ENCODE measurements at regions of chr11 and their contacts with region 1.

Region 1: GRCh38 chr11:93543292-93543977 is at the start of gene SMCO4:
- DNase-seq: peak; percentile 63 to 66
- ATAC-seq: peak; percentile 82 to 88
- H3K4me3 ChIP-seq: peak within 1 kb of the TSS; percentile 64 to 85 (median 72)
- H3K27ac ChIP-seq: peak within 1 kb of the TSS; percentile 69 to 77 (median 74)
- H3K4me1 ChIP-seq: peaks cover 13% of the 10 kb centered on the region in 2 donors
- H3K27me3 ChIP-seq: no peaks in the 10 kb centered on the region
- CTCF ChIP-seq: peak; percentile 72 to 87 (median 76)
- POLR2A ChIP-seq: peak in 1 of 2 donors; percentile 22
- total RNA-seq, gene SMCO4: 3.1 to 18.1 (median 10.2) TPM

Region 2: DNA sequence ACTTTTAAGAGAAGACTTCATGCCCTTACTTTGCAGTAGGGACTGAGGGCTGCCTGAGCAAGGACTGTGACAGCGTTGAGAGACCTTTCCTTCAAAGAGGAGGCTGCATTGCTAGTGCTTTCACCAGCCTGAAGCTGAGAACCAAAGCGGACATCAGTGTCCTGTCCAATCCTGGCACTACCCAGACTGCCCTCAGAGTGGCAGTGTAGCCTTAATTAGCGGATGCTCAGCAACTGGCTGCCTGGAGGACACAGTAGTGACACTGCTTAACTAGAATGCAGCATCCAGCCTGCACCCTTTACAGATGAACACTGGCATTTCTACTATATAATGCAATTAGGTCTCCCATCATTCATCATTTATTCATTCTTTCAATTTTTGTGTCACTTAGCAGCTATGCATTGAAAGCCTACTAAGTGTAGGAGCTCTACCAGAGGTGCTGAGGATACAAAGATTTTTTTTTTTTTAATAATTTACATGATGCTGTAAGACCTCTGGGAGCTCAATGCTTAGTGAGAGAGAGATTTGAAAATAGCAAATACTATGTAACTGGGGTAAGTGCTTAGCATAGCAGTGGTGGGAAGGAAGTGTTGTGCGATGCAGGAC is 308.7 kb before region 1 on chr11:
- in situ Hi-C with region 1: loop called (anchors 5 to 10 kb)
- intact Hi-C with region 1: loop called (anchors 1 kb)
- DNase-seq: peak; percentile 42 to 59
- ATAC-seq: peak; percentile 94 to 99
- H3K4me3 ChIP-seq: no peak overlapping the region
- H3K27ac ChIP-seq: no peak overlapping the region
- H3K4me1 ChIP-seq: no peaks in the 10 kb centered on the region
- H3K27me3 ChIP-seq: no peaks in the 10 kb centered on the region
- CTCF ChIP-seq: peak; percentile 71 to 95 (median 86)
- POLR2A ChIP-seq: no peak

Region 3: DNA sequence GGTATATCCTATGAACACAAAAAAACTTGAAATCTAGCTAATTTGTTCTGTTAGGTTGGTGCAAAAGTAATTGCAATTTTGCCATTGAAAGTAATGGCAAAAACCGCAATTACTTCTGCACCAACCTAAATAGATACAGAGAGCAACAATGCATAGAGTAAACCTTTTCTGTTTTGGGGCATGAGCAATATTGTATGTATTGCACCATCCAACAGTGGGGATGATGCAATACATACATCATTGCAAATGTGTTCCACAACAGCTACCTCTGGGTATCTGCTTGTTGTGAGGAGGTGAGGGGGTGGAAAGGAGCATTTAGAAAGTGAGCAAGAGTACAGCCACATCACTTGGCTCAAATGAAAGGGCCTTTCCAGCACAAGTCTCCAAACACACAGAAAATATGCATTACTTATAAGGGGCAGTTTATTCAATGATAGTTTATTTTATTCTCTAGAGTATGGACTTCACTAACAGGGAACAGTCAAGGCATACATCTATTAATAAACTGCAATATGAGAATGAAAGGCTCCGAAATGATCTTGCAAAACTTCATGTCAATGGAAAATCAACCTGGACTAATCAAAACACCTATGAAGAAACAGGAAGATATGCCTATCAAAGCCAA is 135.5 kb before region 1 on chr11:
- in situ Hi-C with region 1: no loop called
- intact Hi-C with region 1: loop called (anchors 10 kb)
- DNase-seq: no peak
- ATAC-seq: no peak
- H3K4me3 ChIP-seq: no peak overlapping the region
- H3K27ac ChIP-seq: no peak overlapping the region
- H3K4me1 ChIP-seq: no peaks in the 10 kb centered on the region
- H3K27me3 ChIP-seq: no peaks in the 10 kb centered on the region
- CTCF ChIP-seq: no peak
- POLR2A ChIP-seq: no peak

Region 4: DNA sequence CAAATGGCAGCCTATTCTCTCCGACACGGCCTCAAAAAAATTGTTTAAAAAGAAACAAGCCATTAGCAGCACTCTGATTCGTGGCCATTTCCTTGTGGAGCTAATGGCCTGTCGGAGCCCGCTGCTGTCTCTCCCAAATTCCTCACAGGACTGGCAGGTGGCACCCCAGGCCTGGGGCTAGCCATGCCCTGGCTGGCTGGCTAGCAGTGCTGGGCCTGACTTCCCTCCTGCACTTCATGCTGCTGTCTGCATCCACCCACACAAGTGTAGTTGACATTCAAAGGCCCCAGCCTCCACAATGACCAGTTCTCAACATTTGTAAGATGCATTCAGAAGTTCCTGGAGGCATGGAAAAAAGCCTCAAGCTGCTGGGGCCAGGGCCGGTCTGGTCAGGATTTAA is 61.7 kb before region 1 on chr11:
- in situ Hi-C with region 1: no loop called
- intact Hi-C with region 1: loop called (anchors 1 kb)
- DNase-seq: no peak
- ATAC-seq: no peak
- H3K4me3 ChIP-seq: no peak overlapping the region
- H3K27ac ChIP-seq: no peak overlapping the region
- H3K4me1 ChIP-seq: no peaks in the 10 kb centered on the region
- H3K27me3 ChIP-seq: no peaks in the 10 kb centered on the region
- CTCF ChIP-seq: peak in 3 of 5 experiments; percentile 14 to 49 (median 22)
- POLR2A ChIP-seq: no peak

Region 5: GRCh38 chr11:93529707-93530467 is 13.5 kb before region 1 on chr11:
- in situ Hi-C with region 1: no loop called
- intact Hi-C with region 1: loop called (anchors 2 kb)
- DNase-seq: no peak
- ATAC-seq: no peak
- H3K4me3 ChIP-seq: peak overlapping the region in 1 of 4 donors; percentile 24
- H3K27ac ChIP-seq: peak overlapping the region; percentile 85 to 98 (median 90)
- H3K4me1 ChIP-seq: peaks cover 70 to 71% of the 10 kb centered on the region in 2 donors
- H3K27me3 ChIP-seq: no peaks in the 10 kb centered on the region
- CTCF ChIP-seq: no peak
- POLR2A ChIP-seq: no peak

Region 6: DNA sequence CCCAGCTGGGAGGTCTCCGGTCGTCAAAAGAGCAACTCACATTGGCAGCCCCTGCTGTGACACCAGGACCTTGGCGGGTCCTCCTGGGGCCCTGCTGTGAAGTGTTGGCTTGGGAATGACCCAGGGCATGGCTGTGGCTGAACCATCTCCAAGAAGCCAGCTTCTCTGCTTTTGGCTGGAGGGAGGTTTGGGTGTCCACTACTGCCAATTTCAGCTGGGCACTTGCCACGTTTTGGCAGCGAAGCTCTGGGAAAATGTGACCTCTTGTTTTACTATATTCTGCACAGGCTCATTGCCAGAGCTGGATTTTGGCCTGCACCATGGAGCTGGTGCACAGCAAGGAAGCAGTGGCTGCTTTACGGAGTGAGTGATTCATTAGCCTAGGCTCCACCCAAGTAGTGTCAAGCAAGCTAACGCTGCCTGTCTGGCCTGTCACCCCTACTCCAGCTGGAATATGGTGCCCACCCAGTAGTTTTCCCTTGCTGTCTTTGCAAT is 24.0 kb after region 1 on chr11:
- in situ Hi-C with region 1: no loop called
- intact Hi-C with region 1: no loop called
- DNase-seq: peak; percentile 59 to 76
- ATAC-seq: peak; percentile 91
- H3K4me3 ChIP-seq: no peak overlapping the region
- H3K27ac ChIP-seq: peak overlapping the region; percentile 49 to 72 (median 64)
- H3K4me1 ChIP-seq: peaks cover 33 to 42% of the 10 kb centered on the region in 2 donors
- H3K27me3 ChIP-seq: no peaks in the 10 kb centered on the region
- CTCF ChIP-seq: no peak
- POLR2A ChIP-seq: no peak

Region 7: GRCh38 chr11:93585758-93586157 is 42.3 kb after region 1 on chr11:
- in situ Hi-C with region 1: no loop called
- intact Hi-C with region 1: loop called (anchors 1 kb)
- DNase-seq: peak in 1 of 2 donors; percentile 40
- ATAC-seq: peak; percentile 77 to 85
- H3K4me3 ChIP-seq: no peak overlapping the region
- H3K27ac ChIP-seq: peak overlapping the region in 1 of 4 donors; percentile 60
- H3K4me1 ChIP-seq: peaks cover 0 to 10% of the 10 kb centered on the region in 2 donors
- H3K27me3 ChIP-seq: peaks cover 0 to 3% (median 0%) of the 10 kb centered on the region in 3 donors
- CTCF ChIP-seq: no peak
- POLR2A ChIP-seq: no peak

Region 8: DNA sequence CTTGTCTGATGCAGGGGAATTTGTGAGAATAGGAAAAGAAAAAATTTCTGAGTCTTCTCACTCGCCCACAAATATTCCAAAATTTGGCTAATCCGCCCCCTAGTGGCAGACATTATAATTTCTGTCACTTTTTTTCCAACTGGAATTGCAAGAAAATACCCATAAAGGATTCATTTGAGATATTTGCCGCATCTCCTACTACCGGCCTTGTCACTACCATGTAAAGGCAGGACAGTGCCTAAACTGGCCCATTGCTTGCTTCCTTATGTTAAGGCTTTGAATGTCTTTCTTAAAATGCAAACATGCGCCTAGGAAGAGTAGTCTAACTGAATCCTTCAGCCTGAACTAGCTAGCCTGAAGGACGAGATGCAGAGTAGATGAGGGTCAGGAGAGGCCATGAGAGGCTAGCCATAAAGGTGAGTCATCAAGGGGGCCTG is 108.7 kb after region 1 on chr11:
- in situ Hi-C with region 1: loop called in 1 of 4 experiments (anchors 10 kb)
- intact Hi-C with region 1: loop called (anchors 1 kb)
- DNase-seq: no peak
- ATAC-seq: no peak
- H3K4me3 ChIP-seq: no peak overlapping the region
- H3K27ac ChIP-seq: no peak overlapping the region
- H3K4me1 ChIP-seq: no peaks in the 10 kb centered on the region
- H3K27me3 ChIP-seq: no peaks in the 10 kb centered on the region
- CTCF ChIP-seq: peak; percentile 41 to 77 (median 68)
- POLR2A ChIP-seq: no peak

Region 9: DNA sequence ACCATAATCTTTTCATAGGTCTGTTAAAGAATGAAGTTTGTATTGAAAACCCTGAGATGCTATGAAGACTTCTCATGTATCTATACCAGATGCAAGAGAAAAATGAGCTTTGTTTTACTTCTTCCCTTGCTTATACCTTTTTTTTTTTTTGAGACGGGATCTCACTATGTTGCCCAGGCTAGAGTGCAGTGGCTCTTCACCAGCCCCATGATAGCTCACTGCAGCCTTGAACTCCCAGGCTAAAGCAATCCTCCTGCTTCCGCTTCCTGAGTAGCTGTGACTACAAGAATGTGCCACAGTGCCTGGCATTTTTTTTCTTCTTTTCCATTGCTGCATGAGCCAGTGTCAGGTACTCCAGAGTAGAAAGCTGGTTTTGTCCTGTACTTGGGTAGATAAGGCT is 128.8 kb after region 1 on chr11:
- in situ Hi-C with region 1: no loop called
- intact Hi-C with region 1: no loop called
- DNase-seq: no peak
- ATAC-seq: no peak
- H3K4me3 ChIP-seq: no peak overlapping the region
- H3K27ac ChIP-seq: no peak overlapping the region
- H3K4me1 ChIP-seq: no peaks in the 10 kb centered on the region
- H3K27me3 ChIP-seq: no peaks in the 10 kb centered on the region
- CTCF ChIP-seq: no peak
- POLR2A ChIP-seq: no peak

Region 10: GRCh38 chr11:94134651-94135512 is 591.4 kb after region 1 on chr11:
- in situ Hi-C with region 1: no loop called
- intact Hi-C with region 1: no loop called
- DNase-seq: peak; percentile 55 to 88
- ATAC-seq: peak; percentile 90 to 93
- H3K4me3 ChIP-seq: peak overlapping the region in 2 of 4 donors; percentile 16 to 19
- H3K27ac ChIP-seq: peak overlapping the region; percentile 84 to 88 (median 87)
- H3K4me1 ChIP-seq: peaks cover 42 to 44% of the 10 kb centered on the region in 2 donors
- H3K27me3 ChIP-seq: no peaks in the 10 kb centered on the region
- CTCF ChIP-seq: no peak
- POLR2A ChIP-seq: no peak